ENCODE measurements at regions of chr4 and their contacts with region 1.

Region 1: GRCh38 chr4:40840985-40841571 is 91.3 kb downstream of the NSUN7 start:
- DNase-seq: peak; percentile 68
- H3K4me3 ChIP-seq: no peak overlapping the region
- H3K27ac ChIP-seq: no peak overlapping the region
- H3K27me3 ChIP-seq: no peaks in the 10 kb centered on the region
- CTCF ChIP-seq: peak; percentile 79

Region 2: GRCh38 chr4:40804598-40804997 is 36.5 kb before region 1 on chr4:
- CTCF ChIA-PET with region 1: no interaction called
- POLR2A ChIA-PET with region 1: no interaction called
- DNase-seq: no peak
- H3K4me3 ChIP-seq: no peak overlapping the region
- H3K27ac ChIP-seq: no peak overlapping the region
- H3K27me3 ChIP-seq: no peaks in the 10 kb centered on the region
- CTCF ChIP-seq: no peak

Region 3: DNA sequence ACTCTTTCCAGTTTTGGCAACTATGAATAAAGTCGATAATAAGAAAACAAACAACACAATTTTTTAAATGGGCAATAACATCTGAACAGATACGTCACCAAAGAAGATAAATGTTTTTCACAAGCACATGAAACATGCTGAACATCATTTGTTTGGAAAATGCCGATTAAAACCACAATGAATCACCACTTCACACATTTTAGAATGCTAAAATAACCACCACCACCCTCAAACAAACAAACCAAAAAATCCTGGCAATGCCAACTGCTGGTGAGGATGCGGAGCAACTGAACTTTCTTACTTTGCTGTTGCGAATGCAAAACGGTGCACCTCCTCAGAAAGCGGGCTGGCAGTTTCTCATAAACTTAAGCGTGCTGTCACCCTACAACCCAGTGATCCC is 24.6 kb after region 1 on chr4:
- CTCF ChIA-PET with region 1: interaction called, 12 read pairs
- POLR2A ChIA-PET with region 1: no interaction called
- DNase-seq: no peak
- H3K4me3 ChIP-seq: no peak overlapping the region
- H3K27ac ChIP-seq: no peak overlapping the region
- H3K27me3 ChIP-seq: no peaks in the 10 kb centered on the region
- CTCF ChIP-seq: no peak